ENCODE measurements at regions of chr2 and their contacts with region 1.

Region 1: GRCh38 chr2:95165129-95166064 is at the start of gene ZNF2:
- DNase-seq: peak; percentile 94
- H3K4me3 Mint-ChIP-seq: peak within 1 kb of the TSS; percentile 98
- H3K27ac Mint-ChIP-seq: peak within 1 kb of the TSS; percentile 93
- H3K4me1 Mint-ChIP-seq: peaks cover 19% of the 10 kb centered on the region
- H3K27me3 Mint-ChIP-seq: no peaks in the 10 kb centered on the region
- total RNA-seq, gene ZNF2: 3.3 and 3.6 TPM in 2 replicates

Region 2: GRCh38 chr2:95076784-95077529 is 88.4 kb before region 1 on chr2:
- intact Hi-C with region 1: loop called (anchors 5 kb)
- DNase-seq: peak; percentile 86
- H3K4me3 Mint-ChIP-seq: peak overlapping the region; percentile 87
- H3K27ac Mint-ChIP-seq: peak overlapping the region; percentile 95
- H3K4me1 Mint-ChIP-seq: peaks cover 70% of the 10 kb centered on the region
- H3K27me3 Mint-ChIP-seq: no peaks in the 10 kb centered on the region

Region 3: GRCh38 chr2:95121407-95122196 is 43.8 kb before region 1 on chr2 and contains the start of gene MRPS5:
- intact Hi-C with region 1: loop called (anchors 2 kb)
- DNase-seq: peak; percentile 79
- H3K4me3 Mint-ChIP-seq: peak within 1 kb of the TSS; percentile 96
- H3K27ac Mint-ChIP-seq: peak within 1 kb of the TSS; percentile 92
- H3K4me1 Mint-ChIP-seq: peaks cover 38% of the 10 kb centered on the region
- H3K27me3 Mint-ChIP-seq: no peaks in the 10 kb centered on the region
- total RNA-seq, gene MRPS5: 90.7 and 92.4 TPM in 2 replicates

Region 4: DNA sequence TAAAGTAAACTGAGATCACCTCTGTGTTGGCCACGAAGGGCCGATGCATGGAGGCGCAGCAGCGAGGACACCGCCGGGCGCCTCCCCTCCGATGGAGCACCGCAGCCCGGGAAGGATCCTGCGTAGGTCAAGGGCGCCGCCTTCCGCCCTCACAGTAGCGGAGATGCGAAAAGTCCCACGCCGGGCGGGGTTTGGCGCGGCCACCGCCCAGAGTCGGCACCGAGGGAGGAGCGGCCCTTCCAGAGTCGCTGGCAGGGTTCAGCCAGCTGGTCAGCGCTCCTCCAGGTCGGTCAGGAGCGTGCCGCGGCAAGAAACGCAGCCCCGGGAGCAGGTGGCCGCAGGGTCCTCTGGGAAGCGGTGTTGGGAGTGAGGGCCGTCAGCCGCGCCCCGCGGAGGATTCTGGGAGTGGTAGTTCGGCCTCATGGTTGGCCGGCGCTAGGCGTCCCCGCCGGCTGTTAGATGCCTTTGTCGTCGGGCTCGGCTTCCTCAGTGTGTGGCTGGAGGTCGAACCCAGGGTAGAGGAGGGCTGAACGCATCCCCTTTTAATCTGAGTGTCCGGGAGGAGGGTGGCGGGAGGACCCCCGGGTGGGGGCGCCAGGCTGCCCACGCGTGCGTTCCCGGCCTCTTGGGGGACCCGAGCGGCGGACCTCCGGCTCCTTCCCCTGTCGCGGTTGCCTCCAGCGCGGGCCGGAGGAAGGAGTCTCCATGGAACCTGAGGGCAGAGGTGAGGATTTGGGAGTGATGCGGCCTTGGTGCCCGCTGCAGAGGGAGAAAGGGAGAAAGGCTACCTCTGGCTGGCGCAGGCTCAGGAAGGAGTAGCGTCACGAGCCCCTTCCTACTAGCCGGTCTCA is 41.9 kb after region 1 on chr2 and contains the start of gene ZNF892:
- intact Hi-C with region 1: loop called (anchors 1 kb)
- DNase-seq: peak; percentile 75
- H3K4me3 Mint-ChIP-seq: peak within 1 kb of the TSS; percentile 87
- H3K27ac Mint-ChIP-seq: peak within 1 kb of the TSS; percentile 60
- H3K4me1 Mint-ChIP-seq: peaks cover 17% of the 10 kb centered on the region
- H3K27me3 Mint-ChIP-seq: no peaks in the 10 kb centered on the region
- total RNA-seq, gene ZNF892: 4.7 and 4.8 TPM in 2 replicates

Region 5: DNA sequence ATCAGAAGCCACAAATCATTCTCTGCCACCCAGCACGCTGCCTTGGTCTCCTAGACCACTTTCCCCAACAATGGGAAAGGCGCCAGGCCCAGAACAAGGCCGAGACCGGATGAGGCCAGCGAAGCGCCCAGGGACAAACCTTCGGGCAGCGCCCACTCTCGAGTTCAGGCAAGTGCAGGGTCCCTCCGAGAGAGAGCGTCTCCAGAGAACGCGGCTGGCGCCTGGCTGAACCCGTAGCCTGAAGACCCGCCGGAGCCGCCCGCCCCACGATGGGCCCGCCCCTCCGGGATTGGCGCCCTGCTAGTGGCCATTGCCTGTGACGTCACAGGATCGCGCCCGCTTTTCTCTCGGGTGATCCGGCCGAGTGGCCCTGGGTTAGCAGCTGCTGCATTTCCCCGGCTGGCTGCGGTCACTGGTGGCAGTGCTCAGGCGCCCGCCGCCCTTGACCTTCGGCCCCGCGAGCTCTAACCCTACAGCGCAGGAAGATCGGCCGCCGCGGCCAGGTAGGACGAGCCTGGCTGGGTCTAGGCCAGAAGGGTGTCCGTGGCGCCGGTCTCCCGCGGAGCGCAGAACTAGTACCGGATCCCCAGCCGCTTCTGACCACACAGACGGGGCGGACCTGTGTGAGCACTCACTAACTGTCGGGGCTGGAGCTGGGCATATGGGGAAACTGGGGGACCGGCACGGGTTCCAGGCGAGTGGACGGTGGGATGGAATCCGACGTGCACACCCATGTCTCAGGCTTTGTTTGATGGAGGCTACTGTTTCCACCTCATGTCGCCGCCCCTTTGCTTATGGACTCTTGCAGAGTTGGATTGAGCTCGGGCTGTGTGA is 237.2 kb after region 1 on chr2 and contains the start of gene FAHD2A:
- intact Hi-C with region 1: loop called (anchors 1 kb)
- DNase-seq: peak; percentile 93
- H3K4me3 Mint-ChIP-seq: peak within 1 kb of the TSS; percentile 99
- H3K27ac Mint-ChIP-seq: peak within 1 kb of the TSS; percentile 96
- H3K4me1 Mint-ChIP-seq: peaks cover 14% of the 10 kb centered on the region
- H3K27me3 Mint-ChIP-seq: no peaks in the 10 kb centered on the region
- total RNA-seq, gene FAHD2A: 32.5 and 40.3 TPM in 2 replicates